Psoas muscle (tissue), 8 donors: ENCODE measurements at regions of chr2 and their contacts with region 1.

Region 1: GRCh38 chr2:217835931-217836891 is 166.6 kb downstream of the TNS1 start:
- DNase-seq: peak; percentile 80 to 85
- ATAC-seq: peak in 3 of 4 donors; percentile 1 to 4 (median 1)
- H3K4me3 ChIP-seq: no peak overlapping the region
- H3K27ac ChIP-seq: peak overlapping the region; percentile 89
- H3K4me1 ChIP-seq: peaks cover 98% of the 10 kb centered on the region
- H3K27me3 ChIP-seq: no peaks in the 10 kb centered on the region
- CTCF ChIP-seq: no peak

Region 2: GRCh38 chr2:217857624-217858506 is 21.7 kb after region 1 on chr2:
- intact Hi-C with region 1: loop called in 1 of 2 experiments (anchors 2 kb)
- DNase-seq: peak; percentile 59 to 90
- ATAC-seq: peak; percentile 77 to 85 (median 80)
- H3K4me3 ChIP-seq: peak overlapping the region; percentile 66
- H3K27ac ChIP-seq: peak overlapping the region; percentile 89
- H3K4me1 ChIP-seq: peaks cover 65% of the 10 kb centered on the region
- H3K27me3 ChIP-seq: no peaks in the 10 kb centered on the region
- CTCF ChIP-seq: no peak